Activated T-helper 1 cell treated with anti-CD3 and anti-CD28 coated beads, Interleukin-12 subunit alpha, Interleukin-12 subunit beta, Interleukin-2, Interleukin-4 antibody, amounts not matched to agents 30 ng/mL and 10 ng/mL and 1 ng/mL, durations not matched to agents 14 hours and 24 hours and 36 hours (primary cell): ENCODE measurements at regions of chr10 and their contacts with region 1.

Region 1: DNA sequence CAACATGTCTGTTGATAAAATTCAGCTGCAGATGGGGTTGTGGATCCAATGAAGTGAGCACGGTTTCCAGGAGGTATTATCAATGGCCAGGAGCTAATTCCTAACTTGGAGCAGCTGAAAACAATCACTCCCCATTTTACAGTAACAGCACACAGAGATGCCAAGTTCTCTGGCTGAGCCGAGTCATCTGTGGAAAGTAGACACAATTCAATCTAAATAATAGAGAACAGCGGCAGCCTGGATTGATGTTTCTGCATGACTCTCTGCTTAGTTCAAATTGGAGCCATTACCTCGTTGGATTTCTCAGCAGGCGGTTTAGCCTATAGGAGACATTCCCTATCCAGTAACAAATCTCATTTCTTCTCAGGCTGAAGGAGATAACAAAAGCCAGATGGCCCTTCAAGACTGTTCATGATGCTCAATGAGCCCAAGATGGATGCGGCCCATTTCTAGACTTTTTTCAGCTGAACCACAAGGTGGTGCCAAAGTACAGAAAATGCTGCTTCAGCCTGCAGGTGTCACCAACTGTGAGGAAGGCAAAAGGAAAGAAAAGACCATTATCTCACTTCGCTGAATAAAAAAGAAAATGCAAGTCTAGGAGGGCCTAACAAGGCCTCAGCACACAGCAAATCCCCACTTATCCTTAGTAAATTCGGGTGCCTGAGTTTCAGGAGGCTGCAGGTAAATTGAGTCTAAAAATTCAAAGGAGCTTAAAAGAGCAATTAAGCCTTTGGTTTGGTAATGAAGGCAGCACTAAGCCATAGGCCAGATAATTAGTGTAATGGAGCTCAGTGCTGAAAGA is 83.7 kb downstream of the SLC16A9 start:
- DNase-seq: peak; percentile 36
- H3K4me3 Mint-ChIP-seq: no peak overlapping the region
- H3K27ac Mint-ChIP-seq: no peak overlapping the region
- H3K4me1 Mint-ChIP-seq: peaks cover 6% of the 10 kb centered on the region
- H3K27me3 Mint-ChIP-seq: peaks cover 18% of the 10 kb centered on the region

Region 2: GRCh38 chr10:59240582-59241183 is 385.2 kb before region 1 on chr10:
- intact Hi-C with region 1: loop called (anchors 2 kb)
- DNase-seq: no peak
- H3K4me3 Mint-ChIP-seq: no peak overlapping the region
- H3K27ac Mint-ChIP-seq: no peak overlapping the region
- H3K4me1 Mint-ChIP-seq: no peaks in the 10 kb centered on the region
- H3K27me3 Mint-ChIP-seq: peaks cover 2% of the 10 kb centered on the region

Region 3: DNA sequence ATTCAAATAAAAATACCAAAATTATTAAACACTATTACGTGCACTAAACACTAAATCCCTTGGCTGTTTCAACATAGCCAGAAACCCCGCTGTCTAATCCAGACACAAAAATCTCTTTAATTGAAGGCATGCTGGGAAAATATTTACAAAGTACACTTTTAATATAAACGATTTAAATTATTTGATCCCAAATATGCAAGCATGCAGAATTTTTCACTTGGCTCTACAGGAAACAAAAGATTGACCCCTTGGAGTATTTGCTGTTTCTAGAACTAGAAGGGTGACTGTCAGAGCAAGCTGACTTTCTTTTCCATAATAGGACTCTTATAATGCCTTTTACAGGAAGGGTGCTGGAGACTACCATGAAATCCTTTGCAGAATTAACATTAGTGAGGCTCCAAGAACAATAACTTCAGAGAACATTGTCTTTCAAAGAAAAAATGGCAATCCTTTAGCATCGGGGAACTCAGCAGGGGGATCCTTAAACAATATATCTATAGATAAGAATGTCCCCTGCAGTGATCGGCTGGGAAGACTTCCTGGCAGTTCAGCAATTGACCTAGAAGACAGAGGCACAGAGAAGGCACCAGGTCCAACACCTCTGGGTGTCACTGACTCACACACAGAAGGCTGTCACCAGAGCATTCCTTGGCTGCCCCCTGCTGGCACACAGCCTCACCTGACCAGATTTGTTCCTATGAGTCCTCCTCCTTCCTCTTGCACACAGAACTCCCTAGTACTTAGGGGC is 183.1 kb after region 1 on chr10:
- intact Hi-C with region 1: loop called (anchors 1 kb)
- DNase-seq: peak; percentile 56
- H3K4me3 Mint-ChIP-seq: no peak overlapping the region
- H3K27ac Mint-ChIP-seq: no peak overlapping the region
- H3K4me1 Mint-ChIP-seq: peaks cover 5% of the 10 kb centered on the region
- H3K27me3 Mint-ChIP-seq: no peaks in the 10 kb centered on the region

Region 4: GRCh38 chr10:60099998-60100747 is 474.3 kb after region 1 on chr10:
- intact Hi-C with region 1: loop called (anchors 1 kb)
- DNase-seq: no peak
- H3K4me3 Mint-ChIP-seq: no peak overlapping the region
- H3K27ac Mint-ChIP-seq: no peak overlapping the region
- H3K4me1 Mint-ChIP-seq: no peaks in the 10 kb centered on the region
- H3K27me3 Mint-ChIP-seq: no peaks in the 10 kb centered on the region

Region 5: DNA sequence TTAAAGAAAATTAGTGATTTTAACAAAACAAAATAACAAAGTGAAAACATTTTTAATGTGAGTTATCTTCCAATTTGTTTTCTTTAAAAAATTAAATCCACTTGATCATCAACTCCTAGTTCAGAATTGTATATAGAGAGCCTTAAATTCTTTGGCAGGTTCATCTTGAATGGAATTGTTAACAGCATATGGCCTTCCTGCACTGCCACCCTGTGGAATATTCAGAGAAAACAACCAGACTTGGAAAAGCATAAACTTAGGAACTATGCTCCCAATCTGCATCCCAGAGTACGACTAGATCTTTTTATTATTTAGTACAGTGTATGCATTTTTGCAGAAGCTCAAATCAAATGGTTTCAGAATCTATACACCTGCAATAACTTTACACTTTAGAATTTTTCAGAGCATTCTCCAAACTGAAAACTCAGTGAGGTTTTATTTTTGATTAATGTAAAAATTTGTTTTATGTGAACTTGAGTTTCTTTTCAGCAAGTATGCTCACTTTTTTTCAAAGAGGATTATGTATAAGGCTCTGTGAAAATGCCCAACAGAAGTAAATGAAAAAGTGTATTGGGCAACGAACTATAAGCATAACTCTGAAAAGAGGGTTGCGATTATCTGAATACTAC is 808.6 kb after region 1 on chr10:
- intact Hi-C with region 1: loop called (anchors 1 kb)
- DNase-seq: no peak
- H3K4me3 Mint-ChIP-seq: no peak overlapping the region
- H3K27ac Mint-ChIP-seq: no peak overlapping the region
- H3K4me1 Mint-ChIP-seq: no peaks in the 10 kb centered on the region
- H3K27me3 Mint-ChIP-seq: no peaks in the 10 kb centered on the region